CD8-positive, alpha-beta T cell (primary cell): ENCODE measurements at regions of chr1 and their contacts with region 1.

Region 1: GRCh38 chr1:12166834-12167492 is at the start of gene TNFRSF1B:
- DNase-seq: peak in 8 of 9 experiments; percentile 50 to 83 (median 68)
- ATAC-seq: peak; percentile 58
- H3K4me3 ChIP-seq: peak within 1 kb of the TSS; percentile 68 to 76
- H3K4me3 Mint-ChIP-seq: peak within 1 kb of the TSS; percentile 99
- H3K27ac ChIP-seq: peak within 1 kb of the TSS; percentile 61 to 83
- H3K27ac Mint-ChIP-seq: peak within 1 kb of the TSS; percentile 98
- H3K4me1 ChIP-seq: peaks cover 43% of the 10 kb centered on the region
- H3K4me1 Mint-ChIP-seq: peaks cover 60% of the 10 kb centered on the region
- H3K27me3 ChIP-seq: no peaks in the 10 kb centered on the region
- H3K27me3 Mint-ChIP-seq: no peaks in the 10 kb centered on the region
- CTCF ChIP-seq: no peak
- total RNA-seq, gene TNFRSF1B: 82.6 to 100 TPM

Region 2: DNA sequence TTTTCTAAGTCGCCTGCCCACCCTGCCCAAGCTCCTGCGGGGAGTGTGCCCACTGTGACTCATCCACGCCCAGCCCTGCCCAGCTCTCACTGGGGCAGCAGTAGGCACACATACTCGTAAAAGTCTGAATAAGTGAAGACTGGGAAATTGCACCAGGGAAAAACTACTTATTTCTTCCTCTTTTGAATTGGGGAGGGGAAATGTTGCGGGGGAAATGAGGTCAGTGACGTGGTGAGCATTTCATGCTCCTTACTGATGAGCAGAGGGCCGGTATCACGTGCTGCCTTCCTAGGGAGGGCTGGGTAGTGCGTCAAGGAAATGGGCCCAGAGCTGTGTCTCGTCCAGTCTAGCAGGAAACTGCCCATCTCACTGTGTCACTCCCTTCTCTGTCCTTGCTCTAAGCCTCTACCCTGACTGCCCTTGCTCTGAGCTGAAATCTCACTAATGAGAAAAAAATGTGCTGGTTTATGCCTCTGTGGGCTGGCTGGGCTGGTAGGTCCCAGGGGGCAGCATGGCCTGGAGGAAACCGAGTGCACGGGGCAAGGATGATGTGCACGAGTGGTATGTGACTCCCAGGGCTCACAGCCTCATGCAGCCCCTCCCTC is 13.7 kb before region 1 on chr1:
- CTCF ChIA-PET with region 1: interaction called, 5 read pairs
- POLR2A ChIA-PET with region 1: interaction called, 32 read pairs
- intact Hi-C with region 1: loop called (anchors 1 to 2 kb)
- DNase-seq: peak in 3 of 9 experiments; percentile 47 to 81 (median 66)
- ATAC-seq: no peak
- H3K4me3 ChIP-seq: no peak overlapping the region
- H3K4me3 Mint-ChIP-seq: peak overlapping the region; percentile 8
- H3K27ac ChIP-seq: peak overlapping the region in 1 of 2 experiments; percentile 89
- H3K27ac Mint-ChIP-seq: peak overlapping the region; percentile 80
- H3K4me1 ChIP-seq: peaks cover 69% of the 10 kb centered on the region
- H3K4me1 Mint-ChIP-seq: peaks cover 76% of the 10 kb centered on the region
- H3K27me3 ChIP-seq: no peaks in the 10 kb centered on the region
- H3K27me3 Mint-ChIP-seq: no peaks in the 10 kb centered on the region
- CTCF ChIP-seq: no peak

Region 3: GRCh38 chr1:12709091-12709491 is 542.1 kb after region 1 on chr1:
- CTCF ChIA-PET with region 1: no interaction called
- POLR2A ChIA-PET with region 1: no interaction called
- intact Hi-C with region 1: no loop called
- DNase-seq: no peak
- ATAC-seq: no peak
- H3K4me3 ChIP-seq: no peak overlapping the region
- H3K4me3 Mint-ChIP-seq: no peak overlapping the region
- H3K27ac ChIP-seq: no peak overlapping the region
- H3K27ac Mint-ChIP-seq: no peak overlapping the region
- H3K4me1 ChIP-seq: no peaks in the 10 kb centered on the region
- H3K4me1 Mint-ChIP-seq: no peaks in the 10 kb centered on the region
- H3K27me3 ChIP-seq: peaks cover 0 to 4% of the 10 kb centered on the region in 2 experiments
- H3K27me3 Mint-ChIP-seq: peaks cover 27% of the 10 kb centered on the region
- CTCF ChIP-seq: no peak